HEK293 (cell line): ENCODE measurements at regions of chr2 and their contacts with region 1.

Region 1: DNA sequence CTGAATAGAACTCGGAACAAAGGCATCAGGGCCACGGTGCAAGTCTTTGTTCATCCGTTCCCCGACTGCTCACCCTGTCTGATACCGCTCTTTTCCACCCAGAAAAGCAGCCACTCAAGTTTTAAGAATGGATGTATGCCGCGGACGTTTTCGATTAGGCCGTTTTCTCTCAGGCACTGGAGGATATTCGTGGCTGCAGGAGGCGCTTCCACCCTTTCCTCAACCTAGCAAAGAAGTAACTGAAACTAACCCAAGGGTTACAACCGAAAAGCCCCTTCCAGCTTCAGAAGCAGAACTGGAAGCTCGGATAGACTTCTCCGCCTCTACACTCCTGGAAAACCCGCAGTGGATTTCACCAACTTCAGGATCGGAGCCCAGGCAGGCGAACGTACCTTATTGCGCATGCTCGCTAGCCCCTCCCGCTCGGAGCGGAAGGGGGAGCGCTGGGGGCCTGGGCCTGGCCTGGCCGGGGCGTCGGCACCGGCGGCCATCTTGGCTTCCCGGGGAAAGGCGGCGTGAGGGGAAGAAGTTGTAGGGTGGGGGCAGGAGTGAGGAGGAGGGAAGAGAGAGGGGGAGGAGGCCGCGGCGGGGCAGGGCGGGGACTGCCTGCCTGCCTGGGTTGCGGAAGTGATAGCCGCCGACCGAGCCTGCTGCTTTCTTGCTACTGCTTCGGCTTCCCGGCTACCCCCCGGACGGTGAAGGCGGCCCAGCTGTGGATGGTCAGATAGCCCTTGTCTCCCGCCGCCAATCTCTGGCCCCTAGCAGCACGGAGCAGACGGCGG is at the start of gene ACTR3:
- H3K4me3 ChIP-seq: peak within 1 kb of the TSS; percentile 100
- H3K27ac ChIP-seq: peak within 1 kb of the TSS; percentile 97
- H3K4me1 ChIP-seq: peaks cover 16% of the 10 kb centered on the region
- CTCF ChIP-seq: no peak

Region 2: DNA sequence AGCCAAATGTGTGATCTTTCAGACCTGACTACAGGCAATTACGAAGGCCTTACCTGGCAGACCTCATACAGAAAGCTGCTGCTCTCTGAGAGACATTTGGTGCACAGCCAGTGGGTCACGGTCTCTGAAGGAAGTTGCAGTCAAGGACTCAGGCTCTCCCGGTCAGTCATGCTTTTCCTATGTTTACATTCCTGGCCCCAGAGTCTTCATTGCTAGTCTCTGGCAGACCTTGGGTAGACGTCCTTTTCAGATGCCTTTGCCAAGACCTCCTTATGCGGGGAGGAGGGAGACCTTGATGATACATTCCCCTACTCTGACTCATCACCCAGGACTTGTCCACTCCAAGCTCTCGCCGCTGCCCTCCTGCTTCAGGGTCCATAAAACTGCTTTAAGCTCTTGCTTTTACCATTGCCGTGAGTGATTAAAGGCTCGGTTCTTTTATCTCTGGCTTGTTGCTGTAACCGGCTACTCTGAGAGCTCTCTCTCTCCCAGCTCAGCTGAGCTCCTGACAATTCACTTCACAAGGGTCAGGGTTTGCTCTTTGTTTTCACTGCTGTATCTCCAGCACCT is 71.2 kb before region 1 on chr2:
- CTCF ChIA-PET with region 1: interaction called, 3 read pairs
- POLR2A ChIA-PET with region 1: interaction called, 10 read pairs
- H3K4me3 ChIP-seq: no peak overlapping the region
- H3K27ac ChIP-seq: no peak overlapping the region
- H3K4me1 ChIP-seq: peaks cover 3% of the 10 kb centered on the region; the same call in 1 of the 2 replicates
- CTCF ChIP-seq: no peak

Region 3: GRCh38 chr2:113930448-113930847 is 40.8 kb after region 1 on chr2:
- CTCF ChIA-PET with region 1: no interaction called
- POLR2A ChIA-PET with region 1: no interaction called
- H3K4me3 ChIP-seq: no peak overlapping the region
- H3K27ac ChIP-seq: no peak overlapping the region
- H3K4me1 ChIP-seq: no peaks in the 10 kb centered on the region
- CTCF ChIP-seq: no peak